ENCODE measurements at regions of chr11 and their contacts with region 1.

Region 1: DNA sequence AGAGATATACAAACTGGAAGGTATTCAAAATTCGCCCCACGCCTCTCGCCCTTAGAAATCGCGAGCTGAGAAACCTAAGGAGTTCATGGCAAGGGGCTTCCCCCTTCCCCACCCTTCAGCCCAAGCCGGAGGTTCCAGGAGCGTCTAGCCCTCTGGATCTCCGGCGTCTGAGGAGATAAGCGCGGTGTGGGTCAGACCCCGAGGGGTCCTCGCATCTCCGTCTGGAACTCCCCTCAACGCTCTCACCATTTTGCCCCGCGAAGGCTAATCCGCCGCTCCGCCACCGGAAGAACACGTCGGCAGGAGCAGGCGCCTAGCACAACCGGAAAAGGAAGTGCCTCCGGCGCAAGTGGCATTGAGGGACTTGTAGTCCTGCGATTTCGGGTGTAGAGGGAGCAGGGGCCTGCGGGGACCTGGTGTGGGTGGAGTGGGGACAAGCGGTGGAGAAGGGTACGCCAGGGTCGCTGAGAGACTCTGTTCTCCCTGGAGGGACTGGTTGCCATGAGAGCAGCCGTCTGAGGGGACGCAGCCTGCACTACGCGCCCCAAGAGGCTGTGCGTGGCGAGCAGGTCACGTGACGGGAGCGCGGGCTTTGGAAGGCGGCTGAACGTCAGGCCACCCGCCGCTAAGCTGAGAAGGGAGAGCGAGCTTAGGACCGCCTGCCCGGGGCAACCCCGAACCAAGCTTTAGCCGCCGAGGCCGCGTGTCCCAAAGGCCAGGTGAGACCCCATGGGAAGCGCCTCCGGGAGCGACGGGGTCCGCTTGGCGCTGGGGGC is at the starts of genes FEN1 and TMEM258:
- DNase-seq: peak; percentile 90 to 94
- ATAC-seq: peak; percentile 91 to 96 (median 94)
- H3K4me3 ChIP-seq: peak within 1 kb of the TSS; percentile 86
- H3K27ac ChIP-seq: peak within 1 kb of the TSS; percentile 97
- H3K4me1 ChIP-seq: peaks cover 19% of the 10 kb centered on the region
- H3K27me3 ChIP-seq: no peaks in the 10 kb centered on the region
- CTCF ChIP-seq: no peak
- total RNA-seq, gene FEN1: 5.7 to 10.5 (median 8.5) TPM
- total RNA-seq, gene TMEM258: 76.0 to 93.2 (median 80.9) TPM

Region 2: DNA sequence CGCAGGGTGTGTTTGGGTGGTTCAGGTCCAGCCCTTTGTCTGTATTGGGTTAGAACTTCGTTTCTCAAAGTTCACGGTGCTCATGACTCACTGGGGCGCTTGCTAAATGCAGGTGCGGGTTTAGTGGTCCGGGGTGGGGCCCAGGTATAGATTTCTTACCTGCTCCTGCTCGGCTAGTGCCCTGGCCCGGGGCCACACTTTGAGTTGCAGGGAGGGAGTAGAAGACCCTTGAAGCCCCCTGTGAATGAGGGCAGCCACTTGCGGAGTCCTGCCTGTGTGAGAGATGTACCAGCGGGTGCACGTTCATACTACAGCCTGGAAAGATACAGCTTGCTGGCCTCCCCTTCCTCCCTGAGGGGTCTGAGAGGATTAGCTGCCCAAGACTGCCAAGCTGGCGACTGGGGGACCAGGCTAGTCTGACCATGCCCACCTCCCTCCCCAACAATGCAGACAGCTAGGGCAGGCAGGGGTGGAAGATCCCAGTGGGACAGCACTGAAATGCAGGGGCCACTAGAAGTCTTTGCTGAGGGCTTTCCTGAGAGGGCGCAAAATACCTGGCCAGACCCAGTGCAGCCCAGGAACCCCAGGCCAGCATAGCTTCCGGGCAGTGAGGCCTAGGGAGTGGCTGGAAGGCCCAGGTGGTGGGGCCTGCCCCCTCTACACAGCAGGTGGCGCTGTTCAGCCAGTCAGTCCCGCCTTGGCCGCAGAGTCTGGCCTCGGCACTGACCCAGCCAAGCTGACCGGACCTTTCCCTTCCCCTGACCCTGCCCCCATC is 45.1 kb before region 1 on chr11:
- intact Hi-C with region 1: no loop called
- DNase-seq: peak; percentile 84 to 89
- ATAC-seq: peak; percentile 89 to 95 (median 90)
- H3K4me3 ChIP-seq: no peak overlapping the region
- H3K27ac ChIP-seq: no peak overlapping the region
- H3K4me1 ChIP-seq: peaks cover 6% of the 10 kb centered on the region
- H3K27me3 ChIP-seq: peaks cover 0 to 5% (median 0%) of the 10 kb centered on the region in 3 donors
- CTCF ChIP-seq: peak; percentile 82

Region 3: DNA sequence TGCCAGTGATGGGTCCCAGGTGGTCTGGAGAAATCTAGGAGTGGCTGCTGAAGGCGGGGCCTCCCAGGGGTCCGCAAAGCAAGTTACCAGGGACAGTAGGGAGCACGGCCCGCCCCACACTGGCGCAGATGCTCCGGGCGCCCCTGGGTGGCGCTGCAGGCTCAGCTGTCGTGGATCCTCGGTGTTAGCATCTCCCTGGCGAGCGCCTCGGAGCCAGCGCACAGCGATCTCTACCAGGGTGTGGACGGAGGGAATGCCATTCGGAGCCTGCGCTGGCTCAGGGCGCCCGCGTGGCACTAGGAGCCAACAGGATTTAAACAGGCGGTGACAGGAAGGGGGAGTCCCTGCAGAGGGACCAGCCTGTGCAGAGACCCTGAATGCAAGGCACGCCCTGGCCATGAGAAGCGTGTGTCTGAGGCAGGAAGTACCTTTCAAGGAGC is 78.7 kb after region 1 on chr11:
- intact Hi-C with region 1: loop called in 1 of 2 experiments (anchors 5 kb)
- DNase-seq: peak; percentile 82 to 89
- ATAC-seq: peak; percentile 84 to 94 (median 92)
- H3K4me3 ChIP-seq: peak overlapping the region; percentile 20
- H3K27ac ChIP-seq: peak overlapping the region; percentile 30
- H3K4me1 ChIP-seq: peaks cover 7% of the 10 kb centered on the region
- H3K27me3 ChIP-seq: no peaks in the 10 kb centered on the region
- CTCF ChIP-seq: peak; percentile 93

Region 4: GRCh38 chr11:61891331-61892084 is 99.0 kb after region 1 on chr11 and contains the start of gene FADS3:
- intact Hi-C with region 1: loop called (anchors 5 kb)
- DNase-seq: peak; percentile 92 to 94
- ATAC-seq: peak; percentile 77 to 88 (median 80)
- H3K4me3 ChIP-seq: peak within 1 kb of the TSS; percentile 91
- H3K27ac ChIP-seq: peak within 1 kb of the TSS; percentile 87
- H3K4me1 ChIP-seq: peaks cover 23% of the 10 kb centered on the region
- H3K27me3 ChIP-seq: no peaks in the 10 kb centered on the region
- CTCF ChIP-seq: no peak
- total RNA-seq, gene FADS3: 49.3 to 247 (median 57.9) TPM

Region 5: GRCh38 chr11:61899146-61899841 is 106.8 kb after region 1 on chr11:
- intact Hi-C with region 1: loop called (anchors 5 kb)
- DNase-seq: peak; percentile 83 to 93
- ATAC-seq: peak; percentile 86 to 93 (median 90)
- H3K4me3 ChIP-seq: no peak overlapping the region
- H3K27ac ChIP-seq: no peak overlapping the region
- H3K4me1 ChIP-seq: no peaks in the 10 kb centered on the region
- H3K27me3 ChIP-seq: no peaks in the 10 kb centered on the region
- CTCF ChIP-seq: peak; percentile 100

Region 6: GRCh38 chr11:61947486-61948210 is 155.2 kb after region 1 on chr11:
- intact Hi-C with region 1: loop called (anchors 2 to 10 kb)
- DNase-seq: peak; percentile 87 to 92
- ATAC-seq: peak; percentile 82 to 88 (median 86)
- H3K4me3 ChIP-seq: no peak overlapping the region
- H3K27ac ChIP-seq: no peak overlapping the region
- H3K4me1 ChIP-seq: no peaks in the 10 kb centered on the region
- H3K27me3 ChIP-seq: no peaks in the 10 kb centered on the region
- CTCF ChIP-seq: peak; percentile 92

Region 7: GRCh38 chr11:62081378-62082291 is 289.1 kb after region 1 on chr11:
- intact Hi-C with region 1: loop called in 1 of 2 experiments (anchors 5 kb)
- DNase-seq: peak; percentile 75 to 83
- ATAC-seq: peak; percentile 82 to 93 (median 89)
- H3K4me3 ChIP-seq: no peak overlapping the region
- H3K27ac ChIP-seq: no peak overlapping the region
- H3K4me1 ChIP-seq: peaks cover 3% of the 10 kb centered on the region
- H3K27me3 ChIP-seq: no peaks in the 10 kb centered on the region
- CTCF ChIP-seq: peak; percentile 90

Region 8: DNA sequence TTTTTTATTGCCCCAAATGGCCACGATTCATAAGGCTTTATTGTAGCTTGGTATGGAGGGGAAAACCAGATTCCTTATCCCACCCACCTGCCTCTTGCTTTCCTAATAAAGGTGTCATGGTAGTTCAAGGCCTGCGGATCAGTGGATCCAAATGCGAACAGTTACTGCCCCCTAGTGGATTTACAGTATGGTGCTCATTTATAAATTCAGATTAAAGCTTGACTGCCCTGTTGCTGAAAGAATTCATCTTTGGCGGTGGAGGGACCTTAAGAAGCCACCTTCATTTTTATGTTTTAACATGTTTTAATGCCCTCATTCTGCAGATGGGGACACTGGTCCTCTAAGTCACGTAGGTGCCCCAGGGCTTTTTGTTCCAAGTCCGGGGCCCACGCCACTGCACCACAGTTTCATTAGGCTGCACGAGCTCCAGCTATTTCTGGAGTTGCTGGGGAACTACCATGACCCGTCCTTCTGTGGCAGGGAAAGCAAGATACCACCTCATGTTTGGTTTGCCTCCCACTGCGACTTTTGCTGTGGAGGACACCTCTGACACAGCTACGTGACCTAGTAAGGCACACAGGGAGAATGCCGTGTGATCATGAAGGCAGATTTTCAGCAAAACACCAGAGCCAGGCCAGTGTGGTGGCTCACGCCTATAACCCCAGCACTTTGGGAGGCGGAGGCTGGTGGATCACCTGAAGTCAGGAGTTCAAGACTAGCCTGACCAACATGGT is 315.7 kb after region 1 on chr11:
- intact Hi-C with region 1: loop called (anchors 2 to 5 kb)
- DNase-seq: no peak
- ATAC-seq: peak; percentile 46 to 66 (median 56)
- H3K4me3 ChIP-seq: no peak overlapping the region
- H3K27ac ChIP-seq: no peak overlapping the region
- H3K4me1 ChIP-seq: peaks cover 27% of the 10 kb centered on the region
- H3K27me3 ChIP-seq: no peaks in the 10 kb centered on the region
- CTCF ChIP-seq: peak; percentile 82

Measured in psoas muscle (tissue), 8 donors.